CD4-positive, alpha-beta T cell (primary cell): ENCODE measurements at regions of chr12 and their contacts with region 1.

Region 1: DNA sequence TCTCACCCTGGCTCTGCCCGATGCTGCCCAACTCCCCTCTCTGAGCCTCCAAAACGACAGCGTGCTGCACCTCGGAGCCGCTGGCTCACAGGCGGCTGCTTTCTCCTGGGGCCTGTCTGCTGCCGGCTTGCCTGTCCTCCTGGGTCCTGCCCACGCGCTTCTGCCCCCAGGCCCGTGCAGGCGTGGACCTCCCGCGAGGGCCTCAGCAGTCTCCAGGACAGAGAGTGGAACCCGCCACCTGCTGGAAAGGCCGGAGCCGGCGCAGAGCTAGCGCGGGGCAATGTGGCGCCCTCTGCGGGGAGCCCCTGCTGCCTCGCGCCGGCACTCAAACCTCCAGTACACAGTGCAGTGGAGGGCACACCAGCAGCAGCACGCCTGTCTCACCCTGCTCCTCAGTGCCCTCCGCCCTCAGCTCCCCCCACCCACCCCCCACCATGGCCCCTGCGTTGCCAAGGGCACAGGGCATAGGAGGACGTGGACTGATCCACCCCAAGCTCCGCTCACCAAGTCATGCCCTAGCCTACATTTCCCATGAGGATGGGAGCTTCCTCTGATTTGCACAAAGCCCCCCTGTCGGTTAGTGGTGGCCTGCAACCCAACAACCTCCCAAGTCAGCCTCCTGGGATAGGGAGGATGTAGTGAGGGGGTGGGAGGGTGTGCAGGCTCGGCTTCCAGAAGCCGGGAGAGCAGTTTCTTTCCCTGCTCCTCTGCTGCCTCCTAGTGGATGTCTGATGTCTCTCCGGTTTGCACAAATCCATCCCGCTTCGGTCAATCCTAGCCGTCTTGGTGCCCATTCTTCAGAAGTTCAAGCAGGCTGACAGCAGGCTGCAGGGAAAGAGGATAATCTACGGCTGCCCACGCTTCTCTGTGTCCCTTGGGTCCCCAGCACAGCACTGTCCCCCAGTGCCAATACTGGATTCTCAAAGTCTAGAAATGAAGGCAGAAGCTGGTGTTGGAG is 25.2 kb downstream of the KRT8 start:
- DNase-seq: peak; percentile 59 to 86 (median 70)
- ATAC-seq: peak; percentile 96
- H3K4me3 ChIP-seq: peak overlapping the region; percentile 33
- H3K4me3 Mint-ChIP-seq: peak overlapping the region; percentile 63
- H3K27ac ChIP-seq: no peak overlapping the region
- H3K27ac Mint-ChIP-seq: no peak overlapping the region
- H3K4me1 ChIP-seq: peaks cover 16% of the 10 kb centered on the region
- H3K4me1 Mint-ChIP-seq: peaks cover 12% of the 10 kb centered on the region
- H3K27me3 ChIP-seq: peaks cover 0 to 6% of the 10 kb centered on the region in 2 experiments
- H3K27me3 Mint-ChIP-seq: peaks cover 5% of the 10 kb centered on the region
- CTCF ChIP-seq: peak; percentile 92

Region 2: GRCh38 chr12:52327052-52327829 is 552.4 kb before region 1 on chr12:
- CTCF ChIA-PET with region 1: no interaction called
- POLR2A ChIA-PET with region 1: no interaction called
- intact Hi-C with region 1: loop called in 1 of 2 experiments (anchors 5 kb)
- DNase-seq: peak; percentile 62 to 91 (median 74)
- ATAC-seq: peak; percentile 99
- H3K4me3 ChIP-seq: no peak overlapping the region
- H3K4me3 Mint-ChIP-seq: no peak overlapping the region
- H3K27ac ChIP-seq: no peak overlapping the region
- H3K27ac Mint-ChIP-seq: no peak overlapping the region
- H3K4me1 ChIP-seq: peaks cover 7% of the 10 kb centered on the region
- H3K4me1 Mint-ChIP-seq: peaks cover 7% of the 10 kb centered on the region
- H3K27me3 ChIP-seq: peaks cover 0 to 4% of the 10 kb centered on the region in 2 experiments
- H3K27me3 Mint-ChIP-seq: peaks cover 31% of the 10 kb centered on the region
- CTCF ChIP-seq: peak; percentile 94

Region 3: DNA sequence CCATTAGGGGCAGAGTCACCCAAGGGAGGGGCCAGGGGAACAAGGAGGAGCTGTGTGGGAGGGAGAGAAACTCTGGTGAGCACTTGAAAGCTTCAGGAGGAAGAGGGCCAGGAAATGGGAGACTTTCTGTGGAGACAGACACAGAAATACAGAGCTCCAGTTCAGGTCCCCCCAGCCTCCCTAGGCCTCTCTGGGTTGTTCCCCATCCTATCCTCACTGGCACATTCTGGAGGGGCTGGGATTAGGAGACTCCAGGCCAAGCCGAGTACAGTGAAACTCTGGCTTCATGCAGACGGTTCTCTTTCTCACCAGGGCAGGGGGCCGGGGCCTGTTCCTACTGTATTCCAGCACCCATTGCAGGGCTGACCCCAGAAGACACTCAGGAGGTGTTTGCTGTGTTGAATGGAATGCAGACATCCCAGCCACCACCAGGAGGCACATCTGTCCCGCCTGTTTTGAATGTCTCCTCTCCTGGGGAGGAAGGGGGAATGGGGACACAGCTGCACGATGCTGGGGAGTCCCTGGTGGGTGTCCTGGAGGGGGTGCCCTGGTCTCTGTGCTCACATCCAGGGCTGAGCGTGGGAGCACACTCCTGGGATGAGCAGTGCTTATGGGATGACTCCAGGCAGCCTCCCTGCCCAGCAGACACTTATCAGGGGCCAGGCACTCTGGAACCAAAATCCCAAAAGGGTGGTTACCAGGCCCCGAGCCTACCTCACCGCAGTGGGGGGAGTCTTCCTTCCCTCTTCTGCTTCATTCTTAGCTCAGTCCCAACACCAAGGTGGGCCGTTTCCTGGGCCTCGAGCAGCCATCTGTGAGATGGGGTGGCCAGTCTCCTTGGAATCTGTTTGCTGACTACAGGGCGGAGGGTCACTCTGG is 488.7 kb before region 1 on chr12:
- CTCF ChIA-PET with region 1: no interaction called
- POLR2A ChIA-PET with region 1: no interaction called
- intact Hi-C with region 1: loop called in 1 of 2 experiments (anchors 1 kb)
- DNase-seq: peak in 3 of 14 experiments; percentile 8 to 18 (median 10)
- ATAC-seq: no peak
- H3K4me3 ChIP-seq: no peak overlapping the region
- H3K4me3 Mint-ChIP-seq: no peak overlapping the region
- H3K27ac ChIP-seq: no peak overlapping the region
- H3K27ac Mint-ChIP-seq: no peak overlapping the region
- H3K4me1 ChIP-seq: no peaks in the 10 kb centered on the region
- H3K4me1 Mint-ChIP-seq: no peaks in the 10 kb centered on the region
- H3K27me3 ChIP-seq: peaks cover 0 to 3% of the 10 kb centered on the region in 2 experiments
- H3K27me3 Mint-ChIP-seq: peaks cover 7% of the 10 kb centered on the region
- CTCF ChIP-seq: no peak

Region 4: DNA sequence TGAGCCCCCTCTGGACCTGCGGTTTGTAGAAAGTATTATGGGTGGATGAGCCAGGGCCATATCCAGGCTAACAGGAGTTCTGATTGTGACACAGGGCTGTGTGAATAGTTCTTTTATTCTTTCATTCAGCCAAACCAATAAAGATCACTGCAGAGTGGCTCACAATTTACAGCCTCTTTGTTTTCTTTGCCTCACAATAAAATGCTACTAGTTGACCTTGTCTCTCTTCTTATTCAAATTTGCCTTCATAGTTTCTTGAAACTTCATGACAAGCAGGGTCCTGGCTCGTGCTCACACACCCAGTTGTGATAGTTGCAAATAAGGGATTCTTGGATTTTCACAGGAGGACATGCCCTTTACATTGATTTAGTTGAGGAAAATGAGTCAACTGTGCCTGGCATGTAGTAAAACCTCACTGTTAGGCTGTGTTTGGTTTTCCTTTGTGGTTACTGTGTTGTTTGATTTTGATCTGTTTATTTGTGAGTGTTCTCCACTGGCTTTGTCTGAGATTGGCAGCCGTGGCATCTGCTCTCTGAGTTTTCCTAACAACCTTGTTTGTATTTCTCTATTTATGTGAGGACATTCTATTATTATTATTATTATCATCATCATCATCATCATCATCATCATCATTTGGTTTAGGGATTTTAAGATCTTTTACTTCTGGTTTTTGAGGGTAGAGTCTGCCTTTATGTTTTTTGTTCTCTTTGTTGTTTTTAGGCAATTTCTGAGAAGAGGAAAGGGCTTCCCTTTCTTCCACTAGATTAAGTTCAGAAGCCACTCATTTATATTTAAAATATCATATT is 425.1 kb before region 1 on chr12:
- CTCF ChIA-PET with region 1: no interaction called
- POLR2A ChIA-PET with region 1: no interaction called
- intact Hi-C with region 1: no loop called
- DNase-seq: no peak
- ATAC-seq: no peak
- H3K4me3 ChIP-seq: no peak overlapping the region
- H3K4me3 Mint-ChIP-seq: no peak overlapping the region
- H3K27ac ChIP-seq: no peak overlapping the region
- H3K27ac Mint-ChIP-seq: no peak overlapping the region
- H3K4me1 ChIP-seq: no peaks in the 10 kb centered on the region
- H3K4me1 Mint-ChIP-seq: no peaks in the 10 kb centered on the region
- H3K27me3 ChIP-seq: no peaks in the 10 kb centered on the region
- H3K27me3 Mint-ChIP-seq: peaks cover 4% of the 10 kb centered on the region
- CTCF ChIP-seq: no peak

Region 5: GRCh38 chr12:52582971-52583456 is 296.7 kb before region 1 on chr12:
- CTCF ChIA-PET with region 1: interaction called, 41 read pairs
- POLR2A ChIA-PET with region 1: interaction called, 10 read pairs
- intact Hi-C with region 1: loop called (anchors 1 kb)
- DNase-seq: peak; percentile 38 to 81 (median 60)
- ATAC-seq: peak; percentile 32
- H3K4me3 ChIP-seq: no peak overlapping the region
- H3K4me3 Mint-ChIP-seq: no peak overlapping the region
- H3K27ac ChIP-seq: no peak overlapping the region
- H3K27ac Mint-ChIP-seq: peak overlapping the region; percentile 57
- H3K4me1 ChIP-seq: peaks cover 49% of the 10 kb centered on the region
- H3K4me1 Mint-ChIP-seq: peaks cover 64% of the 10 kb centered on the region
- H3K27me3 ChIP-seq: no peaks in the 10 kb centered on the region
- H3K27me3 Mint-ChIP-seq: no peaks in the 10 kb centered on the region
- CTCF ChIP-seq: peak; percentile 70

Region 6: DNA sequence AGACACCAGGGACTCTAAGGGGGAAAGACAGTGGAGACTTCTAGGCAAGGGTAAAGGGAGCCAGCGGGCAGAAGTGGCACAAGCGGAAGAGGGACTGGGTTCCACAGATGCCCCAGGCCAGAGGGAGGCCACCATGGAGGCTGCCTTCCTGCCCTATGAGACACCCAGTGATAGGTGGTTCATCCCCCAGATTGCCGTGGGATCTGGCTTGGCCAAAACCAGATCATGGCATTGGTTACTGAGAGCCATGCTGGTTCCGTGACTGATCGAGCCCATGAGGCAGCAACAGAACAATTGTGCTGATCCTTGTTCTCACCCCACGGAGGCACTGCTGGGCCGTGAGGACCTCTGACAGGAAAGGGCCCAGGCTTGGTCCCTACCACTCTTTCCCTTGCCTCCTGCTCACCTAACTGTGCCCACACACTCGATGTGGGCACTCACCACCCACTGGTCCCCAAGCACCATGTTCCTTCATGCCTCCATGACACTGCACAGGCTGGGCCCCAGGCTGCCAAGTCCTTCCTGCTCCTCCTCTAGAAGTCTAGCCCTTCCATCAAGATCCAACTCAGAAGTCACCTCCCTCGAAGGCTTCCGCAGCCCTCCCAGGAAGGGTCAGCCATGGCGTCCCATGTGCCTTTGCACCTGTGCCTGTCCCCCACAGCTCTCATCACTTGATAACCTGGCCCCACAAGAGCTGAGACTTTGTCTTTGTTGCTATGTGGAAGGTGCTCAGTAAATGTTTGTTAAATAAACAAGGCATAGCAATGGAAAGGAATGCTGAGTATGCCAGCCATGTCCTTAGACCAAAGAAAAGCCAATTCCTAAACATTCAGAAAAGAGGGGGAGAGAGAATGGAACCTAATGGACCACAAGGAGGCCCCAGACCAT is 52.8 kb before region 1 on chr12:
- CTCF ChIA-PET with region 1: no interaction called
- POLR2A ChIA-PET with region 1: no interaction called
- intact Hi-C with region 1: no loop called
- DNase-seq: no peak
- ATAC-seq: no peak
- H3K4me3 ChIP-seq: no peak overlapping the region
- H3K4me3 Mint-ChIP-seq: no peak overlapping the region
- H3K27ac ChIP-seq: no peak overlapping the region
- H3K27ac Mint-ChIP-seq: no peak overlapping the region
- H3K4me1 ChIP-seq: peaks cover 4% of the 10 kb centered on the region
- H3K4me1 Mint-ChIP-seq: peaks cover 12% of the 10 kb centered on the region
- H3K27me3 ChIP-seq: no peaks in the 10 kb centered on the region
- H3K27me3 Mint-ChIP-seq: no peaks in the 10 kb centered on the region
- CTCF ChIP-seq: no peak

Region 7: DNA sequence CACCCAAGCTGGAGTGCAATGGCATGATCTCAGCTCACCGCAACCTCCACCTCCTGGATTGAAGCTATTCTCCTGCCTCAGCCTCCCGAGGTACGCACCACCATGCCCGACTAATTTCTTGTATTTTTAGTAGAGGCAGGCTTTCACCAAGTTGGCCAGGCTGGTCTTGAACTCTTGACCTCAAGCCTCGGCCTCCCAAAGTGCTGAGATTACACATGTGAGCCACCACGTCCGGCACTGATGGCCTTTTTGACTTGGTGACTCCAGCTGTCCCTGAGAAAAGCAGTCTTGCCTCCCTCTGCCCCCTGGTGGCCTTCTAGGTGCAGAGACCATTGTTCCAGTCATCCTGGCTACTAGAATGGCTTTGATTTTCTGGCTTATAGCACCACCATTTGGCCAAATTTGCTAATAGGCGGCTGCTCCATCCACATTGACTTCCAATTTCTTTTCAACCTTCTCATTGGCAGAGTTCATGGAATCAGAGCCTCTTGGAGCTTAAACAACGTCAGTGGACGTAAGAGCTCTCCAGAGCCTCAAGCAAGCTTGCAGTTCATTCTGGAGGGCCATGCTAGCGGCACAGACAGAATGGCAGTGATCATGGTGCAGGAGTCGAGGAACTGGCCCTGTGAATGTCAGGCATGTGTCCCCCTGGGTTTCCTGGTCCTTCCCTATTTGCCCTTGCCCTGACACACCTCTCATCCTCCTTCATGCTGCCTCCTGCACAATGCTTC is 101.2 kb after region 1 on chr12:
- CTCF ChIA-PET with region 1: interaction called, 53 read pairs
- POLR2A ChIA-PET with region 1: interaction called, 11 read pairs
- intact Hi-C with region 1: loop called (anchors 1 kb)
- DNase-seq: peak; percentile 64 to 91 (median 76)
- ATAC-seq: peak; percentile 97
- H3K4me3 ChIP-seq: no peak overlapping the region
- H3K4me3 Mint-ChIP-seq: no peak overlapping the region
- H3K27ac ChIP-seq: no peak overlapping the region
- H3K27ac Mint-ChIP-seq: no peak overlapping the region
- H3K4me1 ChIP-seq: peaks cover 3% of the 10 kb centered on the region
- H3K4me1 Mint-ChIP-seq: no peaks in the 10 kb centered on the region
- H3K27me3 ChIP-seq: peaks cover 0 to 4% of the 10 kb centered on the region in 2 experiments
- H3K27me3 Mint-ChIP-seq: peaks cover 54% of the 10 kb centered on the region
- CTCF ChIP-seq: peak; percentile 99